K562 (cell line): ENCODE measurements at regions of chr11 and their contacts with region 1.

Region 1: GRCh38 chr11:36265793-36266628 is 23.2 kb downstream of the COMMD9 start:
- DNase-seq: peak; percentile 73 to 78 (median 76)
- ATAC-seq: peak; percentile 95
- H3K4me3 ChIP-seq: no peak overlapping the region
- H3K27ac ChIP-seq: no peak overlapping the region
- H3K4me1 ChIP-seq: no peaks in the 10 kb centered on the region
- H3K27me3 ChIP-seq: peaks cover 0 to 5% of the 10 kb centered on the region in 2 experiments; a peak in 3 of 5 replicates
- CTCF ChIP-seq: peak; percentile 79 to 89 (median 79)
- EP300 ChIP-seq: no peak
- POLR2A ChIP-seq: no peak
- RAD21 ChIP-seq: peak; percentile 82 to 90

Region 2: GRCh38 chr11:35478471-35479091 is 787.4 kb before region 1 on chr11:
- CTCF ChIA-PET with region 1: no interaction called
- POLR2A ChIA-PET with region 1: no interaction called
- in situ Hi-C with region 1: loop called (anchors 10 kb)
- intact Hi-C with region 1: no loop called
- DNase-seq: no peak
- ATAC-seq: no peak
- H3K4me3 ChIP-seq: no peak overlapping the region
- H3K27ac ChIP-seq: no peak overlapping the region
- H3K4me1 ChIP-seq: no peaks in the 10 kb centered on the region
- H3K27me3 ChIP-seq: peaks cover 2 to 10% of the 10 kb centered on the region in 2 experiments; a peak in 3 of 5 replicates
- CTCF ChIP-seq: no peak
- EP300 ChIP-seq: no peak
- POLR2A ChIP-seq: no peak
- RAD21 ChIP-seq: no peak

Region 3: GRCh38 chr11:35485656-35486322 is 780.2 kb before region 1 on chr11:
- CTCF ChIA-PET with region 1: interaction called, 7 read pairs
- POLR2A ChIA-PET with region 1: no interaction called
- in situ Hi-C with region 1: no loop called
- intact Hi-C with region 1: loop called (anchors 5 kb)
- DNase-seq: peak; percentile 65 to 84 (median 79)
- ATAC-seq: peak; percentile 100
- H3K4me3 ChIP-seq: no peak overlapping the region
- H3K27ac ChIP-seq: no peak overlapping the region
- H3K4me1 ChIP-seq: no peaks in the 10 kb centered on the region
- H3K27me3 ChIP-seq: no peaks in the 10 kb centered on the region
- CTCF ChIP-seq: peak; percentile 81 to 91 (median 82)
- EP300 ChIP-seq: no peak
- POLR2A ChIP-seq: no peak
- RAD21 ChIP-seq: peak; percentile 65 to 67

Region 4: GRCh38 chr11:35605711-35606110 is 660.3 kb before region 1 on chr11:
- CTCF ChIA-PET with region 1: no interaction called
- POLR2A ChIA-PET with region 1: no interaction called
- in situ Hi-C with region 1: loop called (anchors 5 kb)
- intact Hi-C with region 1: no loop called
- DNase-seq: no peak
- ATAC-seq: no peak
- H3K4me3 ChIP-seq: no peak overlapping the region
- H3K27ac ChIP-seq: no peak overlapping the region
- H3K4me1 ChIP-seq: no peaks in the 10 kb centered on the region; a peak in 1 of 5 replicates
- H3K27me3 ChIP-seq: peaks cover 17 to 23% of the 10 kb centered on the region in 2 experiments; a peak in 4 of 5 replicates
- CTCF ChIP-seq: no peak
- EP300 ChIP-seq: no peak
- POLR2A ChIP-seq: no peak
- RAD21 ChIP-seq: no peak

Region 5: DNA sequence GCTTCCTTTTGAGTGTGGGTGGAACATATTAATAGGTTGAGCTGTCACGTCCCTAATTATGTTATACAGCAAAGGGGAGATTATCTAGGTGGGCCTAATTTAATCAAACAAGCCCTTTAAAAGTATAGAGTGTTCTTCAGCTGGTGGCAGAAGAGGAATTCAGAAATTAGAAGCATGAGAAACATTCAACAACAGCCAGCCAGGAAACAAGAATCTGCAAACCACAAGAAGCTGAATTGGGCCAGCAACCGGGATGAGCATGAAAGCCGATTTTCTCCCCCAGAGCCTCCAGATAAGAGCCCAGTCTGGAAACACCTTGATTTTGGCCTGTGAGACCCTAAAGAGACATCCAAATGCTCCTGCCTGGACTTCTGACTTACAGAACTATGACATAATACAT is 427.9 kb before region 1 on chr11:
- CTCF ChIA-PET with region 1: no interaction called
- POLR2A ChIA-PET with region 1: no interaction called
- in situ Hi-C with region 1: loop called (anchors 10 kb)
- intact Hi-C with region 1: no loop called
- DNase-seq: no peak
- ATAC-seq: no peak
- H3K4me3 ChIP-seq: no peak overlapping the region
- H3K27ac ChIP-seq: no peak overlapping the region
- H3K4me1 ChIP-seq: no peaks in the 10 kb centered on the region
- H3K27me3 ChIP-seq: peaks cover 4 to 13% of the 10 kb centered on the region in 2 experiments; a peak in 3 of 5 replicates
- CTCF ChIP-seq: no peak
- EP300 ChIP-seq: no peak
- POLR2A ChIP-seq: no peak
- RAD21 ChIP-seq: no peak

Region 6: GRCh38 chr11:36034551-36035331 is 231.3 kb before region 1 on chr11:
- CTCF ChIA-PET with region 1: no interaction called
- POLR2A ChIA-PET with region 1: no interaction called
- in situ Hi-C with region 1: loop called (anchors 10 kb)
- intact Hi-C with region 1: no loop called
- DNase-seq: no peak
- ATAC-seq: no peak
- H3K4me3 ChIP-seq: no peak overlapping the region
- H3K27ac ChIP-seq: no peak overlapping the region
- H3K4me1 ChIP-seq: no peaks in the 10 kb centered on the region; a peak in 2 of 5 replicates
- H3K27me3 ChIP-seq: peaks cover 0 to 6% of the 10 kb centered on the region in 2 experiments; a peak in 1 of 5 replicates
- CTCF ChIP-seq: peak in 1 of 3 experiments; percentile 27; a peak in 1 of 6 replicates
- EP300 ChIP-seq: no peak
- POLR2A ChIP-seq: no peak
- RAD21 ChIP-seq: peak; percentile 22 to 39

Region 7: GRCh38 chr11:36885154-36885553 is 619.1 kb after region 1 on chr11:
- CTCF ChIA-PET with region 1: no interaction called
- POLR2A ChIA-PET with region 1: no interaction called
- in situ Hi-C with region 1: no loop called
- intact Hi-C with region 1: no loop called
- DNase-seq: no peak
- ATAC-seq: no peak
- H3K4me3 ChIP-seq: no peak overlapping the region
- H3K27ac ChIP-seq: no peak overlapping the region
- H3K4me1 ChIP-seq: no peaks in the 10 kb centered on the region
- H3K27me3 ChIP-seq: no peaks in the 10 kb centered on the region
- CTCF ChIP-seq: no peak
- EP300 ChIP-seq: no peak
- POLR2A ChIP-seq: no peak
- RAD21 ChIP-seq: no peak